Activated B cell treated with CpG ODN at 0.5 μM for 24 hours (primary cell): ENCODE measurements at regions of chr11 and their contacts with region 1.

Region 1: GRCh38 chr11:16613512-16614381 is 124.7 kb upstream of the C11orf58 start:
- DNase-seq: peak; percentile 28
- ATAC-seq: peak; percentile 75
- H3K4me3 Mint-ChIP-seq: peak overlapping the region; percentile 64
- H3K27ac Mint-ChIP-seq: no peak overlapping the region
- H3K4me1 Mint-ChIP-seq: peaks cover 20% of the 10 kb centered on the region
- H3K27me3 Mint-ChIP-seq: peaks cover 51% of the 10 kb centered on the region
- CTCF ChIP-seq: no peak

Region 2: GRCh38 chr11:15819679-15820286 is 794.0 kb before region 1 on chr11:
- CTCF ChIA-PET with region 1: interaction called, 3 read pairs
- POLR2A ChIA-PET with region 1: no interaction called
- intact Hi-C with region 1: loop called (anchors 5 kb)
- DNase-seq: no peak
- ATAC-seq: no peak
- H3K4me3 Mint-ChIP-seq: no peak overlapping the region
- H3K27ac Mint-ChIP-seq: no peak overlapping the region
- H3K4me1 Mint-ChIP-seq: no peaks in the 10 kb centered on the region
- H3K27me3 Mint-ChIP-seq: peaks cover 5% of the 10 kb centered on the region
- CTCF ChIP-seq: no peak

Region 3: DNA sequence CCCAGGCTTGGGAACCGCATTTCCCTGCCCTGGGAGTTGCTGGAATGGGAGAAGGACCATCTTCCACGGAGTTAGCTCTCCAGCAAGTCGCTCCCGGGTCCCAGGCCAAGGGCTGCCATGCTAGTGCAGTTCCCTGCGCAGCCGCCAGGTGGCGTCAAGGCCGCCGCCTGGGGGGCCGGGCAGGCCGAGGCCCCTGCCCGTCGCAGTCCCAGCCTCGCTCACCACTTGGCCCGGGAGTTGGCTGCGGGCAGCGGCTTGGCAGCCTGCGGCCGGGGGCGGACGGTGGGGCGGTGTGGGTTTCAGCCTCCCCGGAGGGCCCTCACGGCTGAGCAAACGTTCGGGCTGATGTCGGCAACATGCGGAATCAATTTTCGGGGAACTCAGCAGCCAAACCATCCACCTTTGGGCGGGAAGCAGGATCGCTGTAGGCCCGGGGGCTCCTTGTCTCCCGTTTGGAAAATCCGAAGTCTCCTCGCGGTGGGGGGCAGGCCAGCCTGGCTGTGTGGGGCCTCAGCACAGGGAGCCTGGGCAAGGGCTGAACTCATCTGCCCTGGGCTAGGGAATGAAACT is 672.5 kb before region 1 on chr11:
- CTCF ChIA-PET with region 1: interaction called, 3 read pairs
- POLR2A ChIA-PET with region 1: no interaction called
- intact Hi-C with region 1: loop called (anchors 2 kb)
- DNase-seq: no peak
- ATAC-seq: no peak
- H3K4me3 Mint-ChIP-seq: no peak overlapping the region
- H3K27ac Mint-ChIP-seq: no peak overlapping the region
- H3K4me1 Mint-ChIP-seq: no peaks in the 10 kb centered on the region
- H3K27me3 Mint-ChIP-seq: no peaks in the 10 kb centered on the region
- CTCF ChIP-seq: no peak

Region 4: GRCh38 chr11:16632295-16633200 is 18.8 kb after region 1 on chr11:
- CTCF ChIA-PET with region 1: no interaction called
- POLR2A ChIA-PET with region 1: no interaction called
- intact Hi-C with region 1: no loop called
- DNase-seq: no peak
- ATAC-seq: no peak
- H3K4me3 Mint-ChIP-seq: no peak overlapping the region
- H3K27ac Mint-ChIP-seq: no peak overlapping the region
- H3K4me1 Mint-ChIP-seq: no peaks in the 10 kb centered on the region
- H3K27me3 Mint-ChIP-seq: peaks cover 10% of the 10 kb centered on the region
- CTCF ChIP-seq: no peak

Region 5: GRCh38 chr11:16785520-16786128 is 171.9 kb after region 1 on chr11:
- CTCF ChIA-PET with region 1: no interaction called
- POLR2A ChIA-PET with region 1: no interaction called
- intact Hi-C with region 1: no loop called
- DNase-seq: no peak
- ATAC-seq: peak; percentile 85
- H3K4me3 Mint-ChIP-seq: no peak overlapping the region
- H3K27ac Mint-ChIP-seq: no peak overlapping the region
- H3K4me1 Mint-ChIP-seq: no peaks in the 10 kb centered on the region
- H3K27me3 Mint-ChIP-seq: no peaks in the 10 kb centered on the region
- CTCF ChIP-seq: peak; percentile 16